Activated B cell treated with CpG ODN at 0.5 μM for 24 hours (primary cell): ENCODE measurements at regions of chr1 and their contacts with region 1.

Region 1: GRCh38 chr1:111570781-111571181 is 48.8 kb upstream of the RAP1A start:
- DNase-seq: peak; percentile 19
- ATAC-seq: peak; percentile 71
- H3K4me3 Mint-ChIP-seq: no peak overlapping the region
- H3K27ac Mint-ChIP-seq: no peak overlapping the region
- H3K4me1 Mint-ChIP-seq: peaks cover 16% of the 10 kb centered on the region
- H3K27me3 Mint-ChIP-seq: no peaks in the 10 kb centered on the region
- CTCF ChIP-seq: no peak

Region 2: GRCh38 chr1:111392460-111392945 is 178.3 kb before region 1 on chr1:
- CTCF ChIA-PET with region 1: no interaction called
- POLR2A ChIA-PET with region 1: no interaction called
- intact Hi-C with region 1: no loop called
- DNase-seq: no peak
- ATAC-seq: peak; percentile 28
- H3K4me3 Mint-ChIP-seq: no peak overlapping the region
- H3K27ac Mint-ChIP-seq: no peak overlapping the region
- H3K4me1 Mint-ChIP-seq: peaks cover 10% of the 10 kb centered on the region
- H3K27me3 Mint-ChIP-seq: no peaks in the 10 kb centered on the region
- CTCF ChIP-seq: no peak

Region 3: GRCh38 chr1:111538343-111539025 is 32.3 kb before region 1 on chr1:
- CTCF ChIA-PET with region 1: no interaction called
- POLR2A ChIA-PET with region 1: no interaction called
- intact Hi-C with region 1: loop called (anchors 5 kb)
- DNase-seq: no peak
- ATAC-seq: no peak
- H3K4me3 Mint-ChIP-seq: no peak overlapping the region
- H3K27ac Mint-ChIP-seq: no peak overlapping the region
- H3K4me1 Mint-ChIP-seq: no peaks in the 10 kb centered on the region
- H3K27me3 Mint-ChIP-seq: peaks cover 2% of the 10 kb centered on the region
- CTCF ChIP-seq: no peak

Region 4: DNA sequence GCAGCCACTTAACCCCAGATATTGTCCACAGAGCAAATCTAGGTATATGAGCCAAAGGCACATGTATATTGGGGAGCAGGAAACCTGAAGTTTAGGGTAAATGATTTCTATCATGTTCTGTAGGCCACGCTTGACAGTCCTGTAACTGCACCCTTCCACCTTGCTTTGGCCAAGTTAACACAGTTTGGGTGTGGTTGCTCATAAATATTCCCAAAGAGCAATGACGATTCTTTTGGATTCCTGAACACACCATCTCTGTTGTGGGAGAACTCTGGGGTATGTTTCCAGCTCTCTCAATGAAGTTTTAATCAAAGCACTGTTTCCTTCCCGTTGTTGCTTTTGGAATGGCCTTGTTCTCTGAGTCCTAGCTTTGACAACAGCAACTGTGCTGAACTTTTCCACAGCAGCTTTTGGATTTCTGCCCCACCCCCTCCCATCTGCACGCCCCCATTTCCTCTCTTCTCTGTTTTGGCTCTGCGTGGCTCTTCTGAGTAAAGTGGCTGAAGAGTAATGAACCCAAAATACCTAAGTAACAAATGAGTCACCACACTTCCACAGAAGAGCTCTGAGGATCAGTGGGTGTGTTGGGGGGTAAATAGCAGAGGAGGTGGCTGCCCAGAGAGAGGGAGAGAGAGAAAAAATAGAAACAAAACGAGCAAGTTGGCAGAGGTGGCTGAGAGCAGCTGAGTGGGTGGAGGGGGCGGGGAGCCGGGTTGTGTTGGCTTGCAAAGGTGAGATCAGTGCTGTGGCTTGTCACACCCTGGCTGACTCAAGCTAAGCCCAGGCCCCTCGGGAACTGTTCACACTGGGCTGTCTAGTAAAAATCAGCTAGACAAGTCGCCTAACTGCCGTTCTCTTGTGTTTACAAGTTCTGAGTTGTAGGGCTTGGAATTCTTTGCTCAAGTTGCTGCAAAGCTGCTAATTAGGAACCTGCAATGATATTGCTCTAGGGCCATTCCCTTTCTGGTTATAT is 21.9 kb after region 1 on chr1:
- CTCF ChIA-PET with region 1: interaction called, 8 read pairs
- POLR2A ChIA-PET with region 1: interaction called, 4 read pairs
- intact Hi-C with region 1: loop called (anchors 1 kb)
- DNase-seq: peak; percentile 58
- ATAC-seq: peak; percentile 93
- H3K4me3 Mint-ChIP-seq: peak overlapping the region; percentile 64
- H3K27ac Mint-ChIP-seq: peak overlapping the region; percentile 90
- H3K4me1 Mint-ChIP-seq: peaks cover 55% of the 10 kb centered on the region
- H3K27me3 Mint-ChIP-seq: no peaks in the 10 kb centered on the region
- CTCF ChIP-seq: no peak

Region 5: DNA sequence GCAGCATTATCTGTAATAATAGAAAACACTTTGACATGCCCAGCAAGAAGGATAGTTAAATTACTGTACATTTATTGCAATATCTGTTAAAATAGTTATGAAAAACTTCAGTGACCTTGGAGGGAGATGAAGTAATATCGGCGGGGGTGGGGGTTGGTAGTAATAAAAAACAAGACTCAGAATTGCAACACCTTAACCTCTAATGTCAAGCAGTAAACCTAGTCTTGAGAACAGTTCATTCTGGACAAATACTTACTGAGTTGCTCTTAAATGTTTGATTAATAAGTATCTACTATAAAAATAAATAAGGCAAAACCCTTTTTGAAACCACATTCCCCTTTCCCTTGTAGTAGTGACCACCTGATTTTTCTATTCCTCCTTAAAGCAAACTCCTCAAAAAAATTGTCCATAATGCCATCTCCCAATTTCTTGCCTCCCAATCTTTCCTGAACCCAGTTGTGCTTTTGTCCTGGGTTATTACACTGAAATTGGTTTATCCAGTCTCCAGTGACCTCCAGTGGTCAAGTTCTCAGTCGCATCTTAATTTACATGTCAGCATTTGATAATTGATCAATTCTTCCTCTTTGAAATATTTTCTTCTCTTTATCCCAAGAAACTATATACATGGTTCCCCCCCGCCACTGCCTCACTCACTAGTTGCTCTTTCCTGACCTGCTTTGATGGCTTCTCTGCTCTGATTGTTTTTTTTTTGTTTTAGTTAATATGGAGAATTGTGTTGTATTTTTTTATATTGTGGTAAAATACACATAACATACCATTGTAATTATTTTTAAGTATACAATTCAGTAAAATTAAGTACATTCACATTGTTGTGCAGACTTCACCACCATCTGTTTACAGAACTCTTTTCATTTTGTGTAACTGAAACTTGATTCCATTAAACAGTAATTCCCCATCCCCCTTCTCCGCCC is 85.6 kb after region 1 on chr1:
- CTCF ChIA-PET with region 1: no interaction called
- POLR2A ChIA-PET with region 1: interaction called, 8 read pairs
- intact Hi-C with region 1: loop called (anchors 1 kb)
- DNase-seq: no peak
- ATAC-seq: no peak
- H3K4me3 Mint-ChIP-seq: no peak overlapping the region
- H3K27ac Mint-ChIP-seq: no peak overlapping the region
- H3K4me1 Mint-ChIP-seq: peaks cover 35% of the 10 kb centered on the region
- H3K27me3 Mint-ChIP-seq: no peaks in the 10 kb centered on the region
- CTCF ChIP-seq: peak; percentile 52